Breast epithelium (tissue), 4 donors: ENCODE measurements at regions of chr10 and their contacts with region 1.

Region 1: GRCh38 chr10:97475936-97476594 is 22.2 kb downstream of the MMS19 start:
- DNase-seq: no peak
- H3K4me3 ChIP-seq: no peak overlapping the region
- H3K27ac ChIP-seq: peak overlapping the region in 1 of 2 donors; percentile 35
- H3K4me1 ChIP-seq: no peaks in the 10 kb centered on the region
- H3K27me3 ChIP-seq: no peaks in the 10 kb centered on the region
- CTCF ChIP-seq: no peak
- POLR2A ChIP-seq: no peak

Region 2: GRCh38 chr10:98621630-98622029 is 1145.6 kb after region 1 on chr10:
- intact Hi-C with region 1: loop called (anchors 10 kb)
- DNase-seq: no peak
- H3K4me3 ChIP-seq: no peak overlapping the region
- H3K27ac ChIP-seq: no peak overlapping the region
- H3K4me1 ChIP-seq: no peaks in the 10 kb centered on the region
- H3K27me3 ChIP-seq: no peaks in the 10 kb centered on the region
- CTCF ChIP-seq: no peak
- POLR2A ChIP-seq: no peak